Mammary epithelial cell (primary cell): ENCODE measurements at regions of chr16 and their contacts with region 1.

Region 1: DNA sequence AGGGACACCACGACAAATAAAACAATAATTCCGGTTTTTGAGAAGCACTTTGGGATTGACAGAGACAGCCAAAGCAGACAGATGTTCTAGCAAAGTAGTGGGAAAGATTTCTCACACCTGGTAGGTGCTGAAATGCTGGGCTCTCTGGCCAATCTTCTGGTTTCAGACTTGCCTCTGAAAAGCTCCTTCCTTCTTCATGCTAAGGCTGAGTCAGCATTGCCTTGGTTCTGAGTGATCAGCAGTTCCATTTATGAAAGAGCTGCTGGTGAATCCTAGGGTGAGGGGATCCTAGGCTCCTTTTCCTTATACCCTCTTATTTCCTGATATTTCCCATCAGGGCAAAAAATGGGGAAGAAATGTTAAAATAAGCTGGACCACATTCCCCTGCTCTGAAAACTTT is 268.7 kb upstream of the SALL1 start:
- DNase-seq: peak; percentile 17
- H3K4me3 ChIP-seq: no peak overlapping the region
- H3K27ac ChIP-seq: peak overlapping the region; percentile 5
- H3K4me1 ChIP-seq: peaks cover 13% of the 10 kb centered on the region
- H3K27me3 ChIP-seq: no peaks in the 10 kb centered on the region
- CTCF ChIP-seq: no peak

Region 2: GRCh38 chr16:51024703-51025102 is 395.1 kb before region 1 on chr16:
- CTCF ChIA-PET with region 1: no interaction called
- dilution Hi-C with region 1: no loop called
- in situ Hi-C with region 1: no loop called
- intact Hi-C with region 1: no loop called
- DNase-seq: no peak
- H3K4me3 ChIP-seq: no peak overlapping the region
- H3K27ac ChIP-seq: no peak overlapping the region
- H3K4me1 ChIP-seq: no peaks in the 10 kb centered on the region
- H3K27me3 ChIP-seq: peaks cover 3% of the 10 kb centered on the region
- CTCF ChIP-seq: no peak

Region 3: DNA sequence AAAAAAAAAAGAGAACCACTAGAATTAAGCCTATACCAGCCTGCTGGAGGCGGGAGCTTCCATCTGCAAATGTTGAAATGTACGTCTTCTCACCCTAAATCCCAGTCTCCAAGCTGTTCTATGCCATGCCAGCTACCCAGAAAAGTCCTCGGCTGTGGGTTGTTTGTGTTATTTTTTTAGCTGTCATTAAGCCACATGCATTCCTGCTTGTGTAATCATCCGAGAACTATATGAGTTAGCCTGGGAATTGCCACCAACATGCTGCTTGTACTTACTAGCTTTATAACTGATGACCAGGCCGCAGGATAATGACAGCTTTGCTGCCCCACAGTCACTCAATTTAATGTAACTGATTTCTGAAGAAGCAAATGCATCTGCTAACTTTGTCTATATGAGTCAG is 45.2 kb after region 1 on chr16:
- CTCF ChIA-PET with region 1: no interaction called
- dilution Hi-C with region 1: no loop called
- in situ Hi-C with region 1: no loop called
- intact Hi-C with region 1: no loop called
- DNase-seq: peak; percentile 3
- H3K4me3 ChIP-seq: no peak overlapping the region
- H3K27ac ChIP-seq: no peak overlapping the region
- H3K4me1 ChIP-seq: no peaks in the 10 kb centered on the region
- H3K27me3 ChIP-seq: no peaks in the 10 kb centered on the region
- CTCF ChIP-seq: no peak

Region 4: GRCh38 chr16:51556694-51557340 is 137.0 kb after region 1 on chr16:
- CTCF ChIA-PET with region 1: no interaction called
- dilution Hi-C with region 1: no loop called
- in situ Hi-C with region 1: no loop called
- intact Hi-C with region 1: loop called (anchors 10 kb)
- DNase-seq: peak; percentile 93
- H3K4me3 ChIP-seq: no peak overlapping the region
- H3K27ac ChIP-seq: peak overlapping the region; percentile 30
- H3K4me1 ChIP-seq: peaks cover 46% of the 10 kb centered on the region
- H3K27me3 ChIP-seq: no peaks in the 10 kb centered on the region
- CTCF ChIP-seq: no peak